GM12878 (cell line): ENCODE measurements at regions of chr14 and their contacts with region 1.

Region 1: DNA sequence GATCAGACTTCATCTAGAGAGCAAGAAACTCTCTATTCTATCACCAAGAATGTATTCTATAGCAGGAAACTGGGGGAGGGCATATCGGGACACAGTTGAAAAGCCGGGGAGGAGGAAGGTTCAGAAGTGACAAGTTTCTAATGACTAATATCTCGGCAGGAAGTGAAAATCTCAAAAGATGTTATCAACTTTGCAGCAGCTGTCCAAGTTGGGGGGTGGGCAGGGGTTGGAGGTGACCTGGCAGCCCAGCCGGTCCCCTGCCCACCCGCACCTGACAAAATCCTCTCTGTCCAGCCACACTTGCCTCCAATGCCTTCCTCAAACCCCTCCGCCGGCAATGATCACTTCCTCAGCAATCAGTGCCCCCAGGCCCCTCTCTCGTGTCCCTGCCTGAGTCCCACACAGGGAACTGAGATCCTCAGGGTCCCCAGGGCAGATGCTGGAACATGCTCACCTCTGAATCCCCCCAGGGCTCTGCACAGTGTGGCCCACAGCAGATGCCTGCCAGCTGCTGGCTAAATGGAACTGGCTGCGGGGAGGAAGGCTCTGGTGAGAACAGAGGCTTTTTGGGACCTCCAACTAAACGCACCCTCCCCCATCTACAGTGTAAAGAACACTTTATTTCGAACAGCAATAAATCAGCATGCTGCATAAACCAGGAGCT is 43.9 kb downstream of the CCDC88C start:
- DNase-seq: peak; percentile 80
- ATAC-seq: peak; percentile 70
- H3K4me3 ChIP-seq: peak overlapping the region; percentile 41
- H3K27ac ChIP-seq: peak overlapping the region; percentile 99
- H3K4me1 ChIP-seq: peaks cover 96% of the 10 kb centered on the region
- H3K27me3 ChIP-seq: no peaks in the 10 kb centered on the region
- CTCF ChIP-seq: no peak
- EP300 ChIP-seq: peak; percentile 92 to 96
- POLR2A ChIP-seq: no peak
- RAD21 ChIP-seq: peak; percentile 26; the same call in 1 of the 2 replicates

Region 2: DNA sequence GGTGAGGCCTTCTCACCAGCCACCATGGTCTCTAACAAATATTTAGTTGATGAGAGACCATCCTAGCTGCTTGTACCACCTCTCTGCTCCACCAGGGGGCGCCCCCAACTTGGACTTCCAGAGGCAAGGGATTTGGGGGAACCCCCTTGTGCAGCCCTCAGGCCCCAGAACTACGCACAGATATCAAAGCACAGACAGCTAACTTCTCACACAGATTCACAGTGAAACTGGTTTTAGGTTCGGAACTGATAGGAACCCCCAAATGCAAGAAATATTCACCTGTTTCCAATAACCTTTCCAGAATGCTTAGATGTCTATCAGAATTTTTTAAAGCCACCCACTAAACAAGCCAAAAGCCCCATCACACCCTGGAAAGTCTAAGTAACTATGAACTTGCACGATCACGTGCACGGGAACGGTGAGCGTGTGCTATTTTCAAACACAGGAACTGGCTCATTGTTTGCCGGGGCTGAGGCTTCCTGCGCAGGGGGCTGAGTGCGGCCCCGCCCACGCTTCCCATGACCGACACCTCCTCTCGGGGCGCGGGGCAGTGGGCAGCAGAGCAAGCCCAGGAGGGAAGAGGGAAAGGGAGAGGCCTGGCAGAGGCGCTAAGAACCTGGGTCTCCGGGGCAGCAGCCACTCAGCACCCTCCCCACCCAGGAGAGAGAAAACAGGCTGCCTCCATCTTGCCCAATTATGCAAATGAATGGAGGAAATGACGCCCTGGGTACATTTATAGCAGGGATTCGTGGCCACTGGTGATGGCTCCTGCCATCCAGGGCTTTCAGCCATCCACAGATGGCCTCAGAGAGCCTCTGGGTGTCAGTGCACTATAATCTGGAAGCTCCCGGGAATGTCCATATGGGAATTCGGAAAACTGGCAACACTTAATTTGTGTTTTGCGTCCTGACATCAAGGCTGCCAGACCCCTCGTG is 49.8 kb before region 1 on chr14:
- CTCF ChIA-PET with region 1: interaction called, 38 read pairs
- POLR2A ChIA-PET with region 1: interaction called, 9 read pairs
- RAD21 ChIA-PET with region 1: interaction called, 17 read pairs
- SMC1A ChIA-PET with region 1: interaction called, 22 read pairs
- in situ Hi-C with region 1: no loop called
- intact Hi-C with region 1: loop called (anchors 1 kb)
- DNase-seq: peak; percentile 75
- ATAC-seq: peak; percentile 89
- H3K4me3 ChIP-seq: peak overlapping the region; percentile 11; the same call in 1 of the 2 replicates
- H3K27ac ChIP-seq: peak overlapping the region; percentile 87
- H3K4me1 ChIP-seq: peaks cover 39% of the 10 kb centered on the region
- H3K27me3 ChIP-seq: no peaks in the 10 kb centered on the region
- CTCF ChIP-seq: peak; percentile 95 to 97 (median 96)
- EP300 ChIP-seq: peak; percentile 29 to 30; a peak in 2 of 4 replicates
- POLR2A ChIP-seq: peak; percentile 66
- RAD21 ChIP-seq: peak; percentile 98

Region 3: DNA sequence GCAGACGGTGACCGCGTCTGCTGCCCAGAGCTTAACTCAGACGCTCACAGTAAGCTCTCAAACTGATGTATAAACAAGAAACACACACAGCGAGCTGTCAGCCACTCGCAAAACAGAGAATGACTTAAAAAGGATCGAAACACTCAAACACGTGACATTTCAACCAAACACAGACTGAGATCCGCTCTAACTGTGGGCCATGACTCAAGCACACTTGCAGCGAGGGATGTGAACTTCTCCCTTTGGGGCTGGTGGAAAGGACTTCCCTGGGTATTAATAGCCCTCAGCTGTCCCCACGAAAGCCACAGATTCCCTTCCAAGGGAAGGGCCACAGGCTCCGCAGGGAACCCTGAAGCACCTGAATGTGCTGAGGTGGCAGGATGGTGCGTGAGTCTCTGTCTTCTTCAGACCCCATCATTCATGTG is 14.8 kb after region 1 on chr14:
- CTCF ChIA-PET with region 1: interaction called, 5 read pairs
- POLR2A ChIA-PET with region 1: interaction called, 4 read pairs
- RAD21 ChIA-PET with region 1: interaction called, 10 read pairs
- SMC1A ChIA-PET with region 1: interaction called, 12 read pairs
- in situ Hi-C with region 1: no loop called
- intact Hi-C with region 1: no loop called
- DNase-seq: no peak
- ATAC-seq: peak; percentile 85
- H3K4me3 ChIP-seq: no peak overlapping the region; the same call in 1 of the 2 replicates
- H3K27ac ChIP-seq: peak overlapping the region; percentile 88
- H3K4me1 ChIP-seq: peaks cover 61% of the 10 kb centered on the region
- H3K27me3 ChIP-seq: no peaks in the 10 kb centered on the region
- CTCF ChIP-seq: no peak
- EP300 ChIP-seq: no peak
- POLR2A ChIP-seq: no peak
- RAD21 ChIP-seq: no peak

Region 4: DNA sequence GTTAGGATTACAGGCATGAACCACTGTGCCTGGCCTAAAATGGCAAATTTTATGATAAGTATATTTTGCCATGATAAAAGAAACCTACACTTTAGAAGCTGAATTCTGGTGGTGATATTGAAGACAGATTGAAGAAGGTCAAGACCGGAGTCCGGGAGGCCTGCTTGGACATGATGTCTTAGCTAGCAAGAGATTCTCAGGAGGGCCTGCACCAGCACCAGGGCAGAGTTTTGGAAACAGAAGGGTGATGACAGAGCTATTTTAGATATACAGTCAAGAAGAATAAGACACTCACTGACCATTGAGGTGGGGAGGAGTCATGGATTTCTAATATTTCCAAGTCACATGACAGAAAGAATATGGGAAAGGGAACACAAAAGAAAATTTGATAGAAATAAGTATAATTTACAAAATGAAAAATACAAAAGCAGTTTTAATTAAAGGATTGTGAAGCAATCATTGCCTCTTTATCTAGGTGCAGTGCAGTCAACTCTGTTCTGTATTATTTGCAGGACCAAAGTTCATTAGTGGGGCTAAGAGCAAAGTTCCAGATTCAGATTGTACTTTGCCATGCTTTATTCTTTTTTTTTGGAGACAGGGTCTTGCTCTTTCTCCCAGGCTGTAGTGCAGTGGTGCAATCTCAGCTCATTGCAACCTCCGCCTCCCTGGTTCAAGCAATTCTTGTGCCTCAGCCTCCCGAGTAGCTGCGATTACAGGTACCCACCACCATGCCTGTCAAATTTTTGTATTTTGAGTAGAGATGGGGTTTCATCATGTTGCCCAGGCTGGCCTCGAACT is 145.7 kb after region 1 on chr14:
- CTCF ChIA-PET with region 1: no interaction called
- POLR2A ChIA-PET with region 1: no interaction called
- RAD21 ChIA-PET with region 1: no interaction called
- SMC1A ChIA-PET with region 1: no interaction called
- in situ Hi-C with region 1: no loop called
- intact Hi-C with region 1: no loop called
- DNase-seq: no peak
- ATAC-seq: no peak
- H3K4me3 ChIP-seq: no peak overlapping the region
- H3K27ac ChIP-seq: no peak overlapping the region
- H3K4me1 ChIP-seq: no peaks in the 10 kb centered on the region
- H3K27me3 ChIP-seq: no peaks in the 10 kb centered on the region
- CTCF ChIP-seq: no peak
- EP300 ChIP-seq: no peak
- POLR2A ChIP-seq: no peak
- RAD21 ChIP-seq: no peak